Astrocyte of the cerebellum (primary cell): ENCODE measurements at regions of chr20 and their contacts with region 1.

Region 1: DNA sequence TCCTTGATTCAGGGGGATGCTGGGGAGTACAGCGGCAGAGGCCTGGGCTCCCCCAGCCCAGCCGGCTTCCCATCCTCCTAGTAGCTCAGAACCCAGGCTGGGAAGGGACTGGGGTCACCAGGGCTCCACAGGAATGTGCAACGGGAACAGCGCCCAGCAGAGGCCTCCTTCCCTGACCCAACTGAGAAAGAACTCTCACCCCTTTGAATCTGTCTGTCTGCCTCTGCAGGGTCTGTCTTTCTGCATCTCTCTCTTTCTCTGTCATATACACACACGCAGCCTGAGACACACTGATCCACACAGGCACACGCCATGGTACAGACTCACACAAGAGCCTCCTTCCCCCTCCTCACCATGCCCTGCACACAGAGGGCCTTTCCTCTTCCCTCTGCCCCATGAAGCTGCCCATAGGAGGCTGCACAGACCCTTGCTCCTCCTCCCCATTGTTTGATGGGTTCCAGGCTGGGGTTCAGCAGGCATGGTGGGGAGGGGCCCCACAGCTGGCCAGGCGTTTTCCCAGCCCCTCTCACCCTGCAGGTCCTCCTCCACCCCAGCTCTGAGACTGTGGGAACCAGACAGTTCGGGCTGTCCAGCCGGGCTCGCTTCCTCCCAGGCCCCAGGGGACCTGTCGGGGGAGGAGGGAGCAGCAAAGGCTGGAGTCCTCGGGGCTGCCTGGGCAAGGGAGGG is 2.8 kb downstream of the FOXS1 start:
- DNase-seq: peak; percentile 45
- H3K4me3 ChIP-seq: no peak overlapping the region
- CTCF ChIP-seq: no peak

Region 2: DNA sequence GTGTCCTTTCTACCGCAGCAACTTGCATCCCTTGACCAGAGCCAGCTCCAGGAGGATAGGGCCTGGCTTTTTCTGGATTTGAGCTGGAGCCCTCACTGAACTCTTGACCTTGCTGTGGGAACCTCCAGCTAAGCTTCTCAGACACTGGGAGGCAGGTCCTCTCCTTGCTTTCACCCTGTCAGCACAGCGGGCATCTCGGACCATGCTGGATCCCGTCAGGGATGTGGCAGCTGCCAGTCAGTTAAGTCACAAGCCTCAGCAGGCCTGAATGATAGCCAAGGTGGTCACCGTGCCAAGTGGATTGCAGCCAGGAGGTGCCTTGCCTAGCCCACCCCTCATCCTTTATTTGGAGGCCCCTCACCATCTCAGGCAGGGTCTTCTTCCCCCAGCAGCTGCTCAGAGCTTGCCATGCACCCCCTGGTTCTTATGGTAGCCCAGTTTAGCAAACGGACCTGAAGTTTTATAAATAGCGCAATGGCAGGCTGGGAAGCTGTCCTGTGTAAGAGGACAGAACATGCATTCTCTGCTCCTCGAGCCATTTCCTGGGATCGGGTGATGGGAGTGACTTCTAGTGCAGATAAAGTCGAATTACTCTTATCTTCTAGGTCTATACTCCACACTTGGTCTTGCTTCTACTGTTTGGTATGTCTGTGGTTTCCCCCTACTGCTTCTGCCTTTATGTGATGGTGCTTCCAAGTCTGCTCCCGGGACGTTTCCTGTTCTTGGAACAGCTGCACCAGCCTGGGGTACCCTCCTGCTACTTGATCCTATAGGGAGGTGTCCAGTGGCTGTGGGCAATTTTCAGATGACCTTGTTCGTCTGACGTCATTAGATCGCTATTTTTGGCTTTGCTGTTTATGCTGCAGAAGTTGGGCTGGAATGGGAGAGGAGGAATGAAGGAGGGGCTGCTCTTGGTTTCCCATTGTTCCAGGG is 30.6 kb before region 1 on chr20:
- in situ Hi-C with region 1: no loop called
- DNase-seq: peak; percentile 93
- H3K4me3 ChIP-seq: no peak overlapping the region
- CTCF ChIP-seq: no peak

Region 3: DNA sequence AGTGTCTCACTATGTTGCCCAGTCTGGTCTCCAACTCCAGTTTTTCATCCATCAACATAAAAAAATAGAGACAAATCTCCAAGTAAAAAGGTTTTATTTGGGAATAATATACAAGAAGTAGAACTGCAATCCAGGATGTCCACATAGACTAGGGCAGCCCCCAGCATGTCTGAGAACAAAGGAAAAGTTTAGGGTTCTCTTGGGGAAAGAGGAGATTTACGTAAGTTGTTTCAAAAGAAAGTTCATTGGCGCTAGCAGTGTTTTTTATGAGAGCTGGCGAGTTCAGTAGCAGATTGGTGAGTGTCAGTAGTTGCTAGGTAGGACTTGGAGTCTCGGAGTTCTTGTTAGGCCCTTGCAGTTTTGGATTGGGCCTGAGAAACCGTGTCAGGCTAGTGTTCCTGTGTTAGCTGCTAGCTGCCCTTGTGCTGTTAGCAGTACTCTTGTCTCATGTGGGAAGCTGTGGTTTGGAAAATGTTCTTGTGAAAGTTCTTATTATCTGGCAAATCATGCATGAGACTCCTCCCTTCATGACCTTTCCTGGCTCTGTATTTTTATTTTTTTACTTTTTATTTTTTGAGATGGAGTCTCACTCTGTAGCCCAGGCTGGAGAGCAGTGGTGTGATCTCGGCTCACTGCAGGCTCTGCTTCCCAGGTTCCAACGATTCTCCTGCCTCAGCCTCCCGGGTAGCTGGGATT is 52.5 kb after region 1 on chr20:
- in situ Hi-C with region 1: no loop called
- DNase-seq: no peak
- H3K4me3 ChIP-seq: no peak overlapping the region
- CTCF ChIP-seq: no peak

Region 4: DNA sequence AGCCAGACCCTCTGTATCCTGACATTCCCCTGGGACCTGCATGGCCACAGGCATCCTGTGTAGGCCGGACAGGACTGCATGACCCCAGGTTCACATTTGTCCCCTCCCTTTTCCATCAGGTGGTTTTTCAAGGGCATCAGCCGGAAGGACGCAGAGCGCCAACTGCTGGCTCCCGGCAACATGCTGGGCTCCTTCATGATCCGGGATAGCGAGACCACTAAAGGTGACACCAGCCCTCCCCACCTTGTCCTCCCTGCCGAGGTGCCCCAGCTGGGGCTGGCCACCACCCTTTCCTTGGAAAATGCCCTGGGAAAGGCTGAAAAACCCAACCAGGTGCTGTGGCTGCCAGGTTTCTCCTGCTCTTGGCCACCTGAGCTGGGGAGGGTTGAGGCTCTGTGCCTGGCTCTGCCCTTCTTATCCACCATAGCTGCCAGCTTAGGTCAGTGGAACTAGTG is 237.1 kb after region 1 on chr20:
- in situ Hi-C with region 1: loop called (anchors 10 kb)
- DNase-seq: no peak
- H3K4me3 ChIP-seq: no peak overlapping the region
- CTCF ChIP-seq: no peak